OCI-LY7 (cell line): ENCODE measurements at regions of chr7 and their contacts with region 1.

Region 1: DNA sequence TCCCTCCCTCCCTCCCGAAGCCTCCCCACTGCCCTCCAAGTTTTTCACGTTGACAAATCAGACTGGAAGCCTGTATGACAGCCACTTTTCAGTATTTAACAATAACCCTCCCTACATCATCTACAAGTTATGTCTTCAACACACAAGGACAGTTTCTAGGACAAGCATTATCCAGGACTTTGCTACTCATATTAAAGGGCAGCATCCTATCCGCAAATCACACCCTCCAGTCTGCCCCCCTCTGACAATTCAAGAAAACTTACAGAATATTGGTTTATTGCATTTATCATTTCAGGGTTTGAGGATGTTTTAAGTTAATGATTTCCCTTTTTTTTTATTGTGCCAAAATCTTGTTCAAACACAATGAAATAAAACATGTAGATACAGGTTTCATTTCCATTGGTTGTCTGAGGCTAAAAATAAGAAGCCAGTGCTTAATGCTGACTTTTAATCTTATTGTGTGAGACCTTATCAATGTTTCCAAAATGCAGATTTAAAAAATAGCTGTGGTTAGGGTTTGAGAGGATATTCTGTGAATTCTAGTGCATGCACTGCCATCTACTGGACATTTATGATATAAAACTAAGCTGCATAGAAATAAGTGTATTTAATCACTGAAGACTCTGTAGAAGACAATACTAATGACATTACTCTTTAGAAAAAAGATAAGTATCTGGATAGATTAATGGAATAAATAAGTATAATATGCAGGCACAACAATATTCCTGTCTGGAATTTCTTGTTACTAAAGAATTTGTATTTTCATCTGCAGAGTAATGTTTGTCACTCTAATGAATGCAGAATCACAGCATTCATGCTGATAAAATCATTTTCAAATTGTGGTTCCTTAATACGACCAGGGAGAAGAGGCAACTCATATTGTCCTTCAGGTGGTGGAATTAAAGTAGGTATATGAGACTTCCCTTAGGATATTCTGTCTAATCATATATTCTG is 64.1 kb downstream of the CAV1 start:
- DNase-seq: peak; percentile 57
- H3K4me3 ChIP-seq: no peak overlapping the region
- H3K27ac ChIP-seq: no peak overlapping the region
- H3K4me1 ChIP-seq: peaks cover under 1% of the 10 kb centered on the region
- CTCF ChIP-seq: peak; percentile 92

Region 2: DNA sequence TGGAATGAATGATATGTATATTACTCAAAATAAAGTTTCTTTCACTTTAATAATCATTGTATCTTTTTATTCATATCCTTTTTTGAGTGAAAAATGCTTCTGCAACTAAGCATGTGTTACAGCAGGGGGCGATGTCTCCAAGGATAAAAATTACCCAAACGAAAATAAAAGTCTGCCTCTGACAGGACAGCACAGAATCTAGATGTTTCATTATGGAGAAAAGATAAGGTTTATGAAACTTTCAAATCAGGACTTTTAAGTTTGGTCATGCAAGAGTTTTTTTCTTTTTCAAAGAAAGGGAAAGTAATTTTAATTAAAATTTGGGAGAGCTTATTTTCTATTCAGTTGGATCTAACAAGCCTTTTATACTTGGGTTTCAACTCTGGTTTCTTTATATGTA is 330.2 kb before region 1 on chr7:
- CTCF ChIA-PET with region 1: no interaction called
- POLR2A ChIA-PET with region 1: interaction called, 3 read pairs
- intact Hi-C with region 1: loop called (anchors 1 kb)
- DNase-seq: peak; percentile 45
- H3K4me3 ChIP-seq: no peak overlapping the region
- H3K27ac ChIP-seq: no peak overlapping the region
- H3K4me1 ChIP-seq: no peaks in the 10 kb centered on the region
- CTCF ChIP-seq: peak; percentile 91

Region 3: DNA sequence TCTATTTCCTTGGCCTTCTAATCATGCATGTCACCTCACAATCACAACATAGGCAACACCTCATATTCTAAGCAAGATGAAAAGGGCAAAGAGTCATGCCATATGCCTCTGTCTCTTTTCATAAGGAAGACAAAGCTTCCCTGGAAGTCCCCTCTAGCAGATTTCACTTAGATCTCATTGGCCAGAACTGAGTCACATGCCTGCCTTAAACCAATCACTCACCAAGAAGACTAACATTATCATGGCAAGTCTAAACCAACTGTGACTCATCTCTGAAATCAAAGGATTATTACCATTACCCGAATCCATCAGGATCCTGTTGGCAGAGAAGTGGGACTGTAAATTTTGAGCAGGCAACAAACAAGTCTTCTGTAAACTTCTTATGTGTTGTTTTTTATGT is 36.3 kb before region 1 on chr7:
- CTCF ChIA-PET with region 1: no interaction called
- POLR2A ChIA-PET with region 1: no interaction called
- intact Hi-C with region 1: no loop called
- DNase-seq: no peak
- H3K4me3 ChIP-seq: no peak overlapping the region
- H3K27ac ChIP-seq: no peak overlapping the region
- H3K4me1 ChIP-seq: no peaks in the 10 kb centered on the region
- CTCF ChIP-seq: no peak

Region 4: DNA sequence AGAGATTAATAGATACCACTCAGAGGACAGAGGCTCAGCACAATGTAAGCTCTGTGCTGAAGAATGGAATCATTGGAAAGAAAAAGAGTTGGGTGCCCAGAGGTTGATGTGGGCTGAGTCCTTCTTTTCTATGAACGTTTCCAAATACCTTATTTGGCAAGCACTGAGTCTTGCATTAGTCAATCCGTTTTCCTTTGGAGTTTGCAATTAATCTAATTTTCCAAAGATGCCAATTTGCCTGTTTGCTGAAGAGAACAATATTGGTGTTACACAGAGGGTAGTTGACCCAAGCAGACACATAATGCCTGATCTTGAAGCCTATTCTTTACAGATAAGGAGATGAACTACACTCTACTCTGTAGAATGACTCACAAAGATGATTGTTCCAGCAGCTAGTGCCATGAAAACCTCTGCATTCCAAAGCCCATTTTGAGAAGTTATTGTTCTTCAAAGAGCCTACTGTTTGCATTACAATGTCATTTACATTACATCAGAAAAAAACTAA is 27.7 kb after region 1 on chr7:
- CTCF ChIA-PET with region 1: no interaction called
- POLR2A ChIA-PET with region 1: no interaction called
- intact Hi-C with region 1: no loop called
- DNase-seq: no peak
- H3K4me3 ChIP-seq: no peak overlapping the region
- H3K27ac ChIP-seq: no peak overlapping the region
- H3K4me1 ChIP-seq: no peaks in the 10 kb centered on the region
- CTCF ChIP-seq: no peak

Region 5: DNA sequence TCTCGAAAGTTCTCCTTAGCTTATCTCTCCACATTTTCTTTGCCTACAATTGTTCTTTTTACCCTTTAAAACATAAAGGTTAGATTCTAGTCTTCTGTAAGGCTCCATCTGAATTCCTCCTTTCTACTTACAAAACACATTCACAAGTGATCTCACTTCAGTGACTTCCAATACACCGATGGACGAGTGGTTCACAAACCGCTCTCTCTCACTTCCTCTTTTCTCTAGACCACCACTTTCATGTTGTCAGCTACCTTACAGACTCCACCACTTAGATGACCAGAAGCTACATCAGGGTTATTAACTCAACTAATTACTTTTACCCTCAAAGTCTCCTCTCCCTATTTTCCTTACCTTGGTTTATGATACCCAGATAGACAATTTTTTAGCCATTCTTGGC is 94.9 kb after region 1 on chr7:
- CTCF ChIA-PET with region 1: no interaction called
- POLR2A ChIA-PET with region 1: no interaction called
- intact Hi-C with region 1: no loop called
- DNase-seq: peak; percentile 82
- H3K4me3 ChIP-seq: no peak overlapping the region
- H3K27ac ChIP-seq: no peak overlapping the region
- H3K4me1 ChIP-seq: peaks cover 13% of the 10 kb centered on the region
- CTCF ChIP-seq: no peak

Region 6: GRCh38 chr7:116809636-116810266 is 220.8 kb after region 1 on chr7:
- CTCF ChIA-PET with region 1: interaction called, 3 read pairs
- POLR2A ChIA-PET with region 1: no interaction called
- intact Hi-C with region 1: loop called (anchors 1 kb)
- DNase-seq: peak; percentile 59
- H3K4me3 ChIP-seq: no peak overlapping the region
- H3K27ac ChIP-seq: no peak overlapping the region
- H3K4me1 ChIP-seq: no peaks in the 10 kb centered on the region
- CTCF ChIP-seq: peak; percentile 86

Region 7: DNA sequence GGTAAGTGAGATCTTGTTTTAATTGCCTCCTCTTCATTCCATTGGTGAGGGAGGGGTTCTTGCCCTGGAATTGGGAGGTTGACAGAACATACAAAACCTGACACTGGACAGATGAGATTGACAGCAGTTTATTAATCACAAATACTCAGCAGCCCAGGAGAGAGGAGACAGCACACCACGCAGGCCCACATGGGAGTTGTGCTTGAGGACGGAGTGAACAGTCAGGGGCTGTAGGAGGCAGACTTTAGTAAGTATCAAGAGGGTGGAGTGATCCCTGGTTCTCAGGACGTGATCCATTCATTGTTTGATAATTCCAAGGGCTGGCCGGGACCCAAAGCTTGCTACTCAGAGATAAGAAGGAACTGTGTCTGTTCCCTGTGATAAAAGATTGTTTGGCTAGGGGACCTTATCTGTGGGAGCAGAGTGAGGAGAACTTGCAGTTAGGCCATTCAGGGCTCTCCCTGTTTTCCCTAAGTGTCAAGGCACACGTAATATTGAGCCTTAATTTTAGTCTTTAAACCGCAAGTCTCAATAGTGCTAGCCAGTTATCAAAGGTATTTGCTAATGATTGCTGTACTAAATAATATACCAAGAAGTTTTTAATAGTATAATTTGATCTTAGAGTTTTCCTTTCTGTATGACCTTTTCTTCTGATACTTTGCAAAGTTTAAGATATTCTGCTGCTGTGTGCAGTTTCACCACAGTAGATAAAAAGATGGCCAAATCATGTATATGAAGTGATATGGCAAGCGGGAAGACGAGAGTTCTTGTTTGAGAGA is 287.9 kb after region 1 on chr7:
- CTCF ChIA-PET with region 1: no interaction called
- POLR2A ChIA-PET with region 1: no interaction called
- intact Hi-C with region 1: no loop called
- DNase-seq: no peak
- H3K4me3 ChIP-seq: no peak overlapping the region
- H3K27ac ChIP-seq: no peak overlapping the region
- H3K4me1 ChIP-seq: no peaks in the 10 kb centered on the region
- CTCF ChIP-seq: no peak